Left ventricle myocardium superior (tissue), 1 donor: ENCODE measurements at regions of chr18 and their contacts with region 1.

Region 1: DNA sequence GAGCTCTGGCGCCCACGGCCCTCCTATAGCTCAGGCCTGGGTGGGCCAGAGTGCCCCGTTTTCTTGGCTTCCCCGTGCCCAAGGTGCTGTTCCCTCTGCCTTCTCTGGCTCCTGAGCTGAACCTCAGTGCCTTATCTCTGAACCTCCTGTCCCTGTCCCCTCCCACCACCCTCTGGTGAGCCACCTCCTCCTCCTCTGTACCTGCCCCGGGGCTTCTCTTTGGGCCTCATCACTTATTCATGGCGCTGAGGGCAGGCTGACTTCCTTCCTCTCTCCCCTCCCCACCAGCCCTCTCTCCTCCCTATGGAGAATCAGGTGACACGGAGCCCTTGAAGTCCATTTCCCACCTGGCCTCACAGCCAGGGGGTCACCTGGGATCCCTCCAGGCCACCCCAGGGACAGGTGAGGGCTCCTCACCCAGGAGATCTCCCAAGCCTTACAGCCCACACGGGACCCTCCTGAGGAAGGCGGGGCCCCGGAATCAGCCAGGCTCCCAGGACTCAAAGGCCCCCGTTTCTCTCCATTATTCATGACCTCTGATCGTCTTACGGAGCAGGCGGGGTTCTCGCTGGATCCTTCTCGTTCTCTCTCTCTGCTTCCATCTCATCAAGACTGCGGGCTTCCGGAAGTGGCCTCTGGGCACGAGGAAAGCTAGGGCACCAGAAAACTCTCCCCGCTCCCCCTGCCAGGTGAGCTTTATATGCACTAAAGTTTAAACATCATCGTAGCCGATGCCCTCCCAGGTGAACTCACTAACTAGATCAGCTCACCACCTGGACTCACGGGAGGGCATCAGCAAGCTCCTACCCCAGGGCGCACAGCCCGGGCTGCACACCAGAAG is at the start of gene LOXHD1:
- DNase-seq: no peak
- ATAC-seq: no peak
- total RNA-seq, gene LOXHD1: 0.74 TPM

Region 2: DNA sequence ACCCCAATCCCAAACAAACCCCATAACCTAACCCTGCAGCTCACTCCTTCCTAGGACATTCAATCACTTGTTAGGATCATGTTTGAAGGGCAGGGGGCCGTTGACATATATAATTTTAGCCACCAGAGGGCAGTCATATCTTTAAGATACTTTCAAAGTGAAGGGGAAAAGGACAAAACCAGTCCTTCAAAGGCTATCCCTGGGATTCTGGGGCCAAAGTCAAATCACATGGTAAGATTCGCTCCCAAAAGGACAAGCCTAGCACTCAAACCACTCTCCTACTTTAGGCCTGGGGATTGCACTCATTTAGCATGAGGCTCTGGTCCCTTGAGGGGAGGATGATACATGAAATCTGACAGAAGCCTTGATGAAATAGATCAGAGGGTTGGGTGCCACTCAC is 508.5 kb before region 1 on chr18:
- intact Hi-C with region 1: loop called (anchors 5 kb)
- DNase-seq: no peak
- ATAC-seq: peak; percentile 57

Region 3: GRCh38 chr18:46574000-46574742 is 83.2 kb before region 1 on chr18:
- intact Hi-C with region 1: loop called (anchors 10 kb)
- DNase-seq: no peak
- ATAC-seq: no peak

Region 4: DNA sequence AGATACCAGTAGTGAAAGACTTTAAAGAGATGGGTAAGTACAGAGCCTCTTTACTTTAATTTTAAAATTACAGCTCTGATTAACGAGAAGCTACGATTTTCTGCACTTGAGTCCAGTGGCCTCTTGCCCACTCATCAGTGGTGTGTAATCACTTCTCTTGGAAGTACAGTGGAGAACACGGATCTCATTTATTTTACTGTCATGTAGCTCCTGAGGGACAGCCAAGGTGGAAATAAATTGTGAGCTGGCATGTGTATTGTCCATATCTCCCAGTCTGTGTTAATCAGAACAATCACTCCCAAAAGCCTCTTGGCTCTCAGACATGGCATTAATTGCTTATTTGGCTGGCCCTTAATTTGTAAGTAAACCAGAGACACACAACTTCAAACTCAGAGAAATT is 69.7 kb before region 1 on chr18:
- intact Hi-C with region 1: no loop called
- DNase-seq: no peak
- ATAC-seq: no peak